HCT116 (cell line): ENCODE measurements at regions of chr18 and their contacts with region 1.

Region 1: DNA sequence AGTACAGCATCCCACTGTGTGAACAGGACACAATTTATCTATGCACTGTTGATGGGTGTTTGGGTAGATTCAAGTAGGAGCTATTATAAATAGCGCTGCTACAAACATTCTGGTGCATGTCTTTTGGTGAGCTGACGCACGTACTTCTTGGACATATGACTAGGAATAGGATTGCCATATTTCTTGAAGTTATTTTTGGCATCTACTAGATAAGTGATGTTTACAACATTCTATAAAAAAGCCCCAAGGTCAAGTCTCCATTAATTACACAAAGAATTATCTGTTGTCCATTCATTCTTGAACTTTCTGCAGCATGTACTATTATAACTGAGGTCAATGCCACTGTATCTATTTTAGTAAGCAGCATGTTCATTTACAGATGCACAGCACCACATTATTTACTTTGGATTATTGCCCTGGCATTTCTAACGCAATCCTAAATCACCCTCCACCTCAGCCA is 225.5 kb upstream of the TMEM200C start:
- DNase-seq: no peak
- ATAC-seq: no peak
- H3K4me3 ChIP-seq: no peak overlapping the region
- H3K27ac ChIP-seq: no peak overlapping the region
- H3K4me1 ChIP-seq: no peaks in the 10 kb centered on the region
- H3K27me3 ChIP-seq: no peaks in the 10 kb centered on the region
- CTCF ChIP-seq: no peak
- POLR2A ChIP-seq: no peak
- RAD21 ChIP-seq: no peak

Region 2: GRCh38 chr18:6044773-6045172 is 76.1 kb before region 1 on chr18:
- CTCF ChIA-PET with region 1: no interaction called
- POLR2A ChIA-PET with region 1: no interaction called
- RAD21 ChIA-PET with region 1: no interaction called
- intact Hi-C with region 1: loop called (anchors 5 kb)
- DNase-seq: no peak
- ATAC-seq: no peak
- H3K4me3 ChIP-seq: no peak overlapping the region
- H3K27ac ChIP-seq: no peak overlapping the region
- H3K4me1 ChIP-seq: no peaks in the 10 kb centered on the region
- H3K27me3 ChIP-seq: no peaks in the 10 kb centered on the region
- CTCF ChIP-seq: no peak
- POLR2A ChIP-seq: no peak
- RAD21 ChIP-seq: no peak

Region 3: GRCh38 chr18:6270771-6271216 is 149.9 kb after region 1 on chr18:
- CTCF ChIA-PET with region 1: no interaction called
- POLR2A ChIA-PET with region 1: no interaction called
- RAD21 ChIA-PET with region 1: no interaction called
- intact Hi-C with region 1: no loop called
- DNase-seq: no peak
- ATAC-seq: no peak
- H3K4me3 ChIP-seq: no peak overlapping the region
- H3K27ac ChIP-seq: no peak overlapping the region
- H3K4me1 ChIP-seq: no peaks in the 10 kb centered on the region
- H3K27me3 ChIP-seq: no peaks in the 10 kb centered on the region
- CTCF ChIP-seq: no peak
- POLR2A ChIP-seq: no peak
- RAD21 ChIP-seq: no peak